Lower lobe of right lung (tissue), 2 donors: ENCODE measurements at regions of chr22 and their contacts with region 1.

Region 1: DNA sequence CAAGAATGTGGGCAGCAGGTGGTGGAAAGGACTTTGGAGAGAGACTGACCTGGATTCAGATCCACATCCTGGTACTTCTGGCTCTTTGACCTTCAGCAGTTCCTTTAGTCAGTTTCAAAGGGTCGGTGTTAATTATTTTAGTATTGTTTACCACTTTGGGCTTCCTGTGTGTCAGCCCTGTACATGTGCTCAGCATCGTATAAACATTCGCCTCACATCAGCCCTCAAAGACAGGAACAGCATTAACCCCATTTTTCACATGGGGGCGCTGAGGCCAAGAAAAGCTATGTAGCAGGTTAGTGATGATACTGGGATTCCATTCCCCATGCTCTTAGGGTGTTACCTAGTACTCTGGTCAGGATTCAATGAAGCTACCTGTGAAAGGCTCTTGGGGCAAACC is 72.1 kb upstream of the YWHAH start:
- DNase-seq: no peak
- ATAC-seq: peak in 1 of 2 donors; percentile 36
- H3K4me3 ChIP-seq: no peak overlapping the region
- H3K27ac ChIP-seq: no peak overlapping the region
- H3K4me1 ChIP-seq: peaks cover 23% of the 10 kb centered on the region
- H3K27me3 ChIP-seq: no peaks in the 10 kb centered on the region
- CTCF ChIP-seq: peak; percentile 17

Region 2: GRCh38 chr22:31734512-31734911 is 137.7 kb before region 1 on chr22:
- intact Hi-C with region 1: no loop called
- DNase-seq: no peak
- ATAC-seq: no peak
- H3K4me3 ChIP-seq: no peak overlapping the region
- H3K27ac ChIP-seq: no peak overlapping the region
- H3K4me1 ChIP-seq: peaks cover 5% of the 10 kb centered on the region
- H3K27me3 ChIP-seq: no peaks in the 10 kb centered on the region
- CTCF ChIP-seq: no peak

Region 3: DNA sequence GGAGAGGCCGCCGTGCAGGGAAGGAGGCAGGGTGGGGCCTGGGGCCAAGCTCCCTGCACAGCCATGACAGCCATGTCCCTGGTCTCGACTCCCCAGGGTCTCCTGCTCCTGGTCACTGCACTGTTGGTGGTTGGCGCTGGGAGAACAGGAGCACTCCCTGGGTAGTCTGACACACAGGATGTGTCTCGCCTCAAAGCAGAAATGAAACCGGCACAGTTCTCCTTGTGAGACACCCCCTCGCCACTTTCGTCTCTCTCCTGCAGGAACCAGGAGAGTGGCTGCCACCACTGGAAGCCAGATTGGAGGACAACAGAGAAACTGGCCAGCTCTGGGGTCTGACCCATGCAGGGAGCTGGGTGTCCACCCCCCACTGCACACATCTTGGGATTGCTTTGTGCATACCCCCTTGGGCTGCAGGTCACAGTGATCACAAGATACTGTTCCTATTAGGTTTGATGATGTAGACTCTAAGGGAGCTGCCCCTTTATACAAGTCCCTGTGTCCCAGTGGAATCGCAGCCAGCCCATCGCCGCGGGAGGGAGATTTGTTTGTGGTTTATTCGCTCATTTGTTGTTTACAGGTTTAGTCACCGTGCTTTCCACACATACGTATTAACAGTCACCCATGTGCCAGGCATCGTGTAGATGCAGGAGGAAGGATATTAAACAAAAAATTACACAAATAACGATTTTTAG is 45.2 kb after region 1 on chr22:
- intact Hi-C with region 1: no loop called
- DNase-seq: peak; percentile 58
- ATAC-seq: peak; percentile 73 to 78
- H3K4me3 ChIP-seq: no peak overlapping the region
- H3K27ac ChIP-seq: peak overlapping the region; percentile 20
- H3K4me1 ChIP-seq: peaks cover 26% of the 10 kb centered on the region
- H3K27me3 ChIP-seq: no peaks in the 10 kb centered on the region
- CTCF ChIP-seq: no peak

Region 4: DNA sequence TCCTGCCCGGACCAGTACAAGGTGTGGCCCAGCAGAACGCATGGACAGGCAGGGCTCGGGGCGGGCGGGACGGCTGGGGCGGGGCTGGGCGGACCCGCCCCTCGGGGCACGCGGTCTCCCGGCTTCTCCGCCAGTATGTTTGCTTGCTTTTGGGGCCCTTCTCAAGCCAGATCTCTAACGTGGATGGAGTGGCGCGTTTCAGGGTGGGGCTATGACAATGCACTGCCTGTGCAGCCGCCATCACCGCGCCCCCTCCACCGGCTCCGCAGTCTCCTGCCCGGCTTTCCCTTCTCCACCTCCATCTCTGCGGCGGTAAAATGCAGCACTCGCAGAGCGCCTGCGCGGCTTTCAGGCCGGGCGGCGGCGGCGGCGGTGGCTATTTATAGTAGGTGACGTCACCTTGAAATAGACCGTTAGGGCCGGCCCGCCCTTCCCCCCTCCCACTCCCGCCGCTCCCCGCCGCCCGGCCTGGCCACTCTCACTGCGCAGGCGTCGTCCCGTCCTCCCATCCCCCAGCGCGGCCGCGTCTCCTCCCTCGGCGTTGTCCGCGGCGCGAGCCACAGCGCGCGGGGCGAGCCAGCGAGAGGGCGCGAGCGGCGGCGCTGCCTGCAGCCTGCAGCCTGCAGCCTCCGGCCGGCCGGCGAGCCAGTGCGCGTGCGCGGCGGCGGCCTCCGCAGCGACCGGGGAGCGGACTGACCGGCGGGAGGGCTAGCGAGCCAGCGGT is 71.9 kb after region 1 on chr22 and contains the start of gene YWHAH:
- intact Hi-C with region 1: loop called (anchors 10 kb)
- DNase-seq: peak; percentile 96
- ATAC-seq: peak; percentile 93 to 98
- H3K4me3 ChIP-seq: peak within 1 kb of the TSS; percentile 92
- H3K27ac ChIP-seq: peak within 1 kb of the TSS; percentile 96
- H3K4me1 ChIP-seq: peaks cover 41% of the 10 kb centered on the region
- H3K27me3 ChIP-seq: no peaks in the 10 kb centered on the region
- CTCF ChIP-seq: no peak
- total RNA-seq, gene YWHAH: 171 TPM